Adrenal gland (tissue), 19 donors: ENCODE measurements at regions of chr9 and their contacts with region 1.

Region 1: DNA sequence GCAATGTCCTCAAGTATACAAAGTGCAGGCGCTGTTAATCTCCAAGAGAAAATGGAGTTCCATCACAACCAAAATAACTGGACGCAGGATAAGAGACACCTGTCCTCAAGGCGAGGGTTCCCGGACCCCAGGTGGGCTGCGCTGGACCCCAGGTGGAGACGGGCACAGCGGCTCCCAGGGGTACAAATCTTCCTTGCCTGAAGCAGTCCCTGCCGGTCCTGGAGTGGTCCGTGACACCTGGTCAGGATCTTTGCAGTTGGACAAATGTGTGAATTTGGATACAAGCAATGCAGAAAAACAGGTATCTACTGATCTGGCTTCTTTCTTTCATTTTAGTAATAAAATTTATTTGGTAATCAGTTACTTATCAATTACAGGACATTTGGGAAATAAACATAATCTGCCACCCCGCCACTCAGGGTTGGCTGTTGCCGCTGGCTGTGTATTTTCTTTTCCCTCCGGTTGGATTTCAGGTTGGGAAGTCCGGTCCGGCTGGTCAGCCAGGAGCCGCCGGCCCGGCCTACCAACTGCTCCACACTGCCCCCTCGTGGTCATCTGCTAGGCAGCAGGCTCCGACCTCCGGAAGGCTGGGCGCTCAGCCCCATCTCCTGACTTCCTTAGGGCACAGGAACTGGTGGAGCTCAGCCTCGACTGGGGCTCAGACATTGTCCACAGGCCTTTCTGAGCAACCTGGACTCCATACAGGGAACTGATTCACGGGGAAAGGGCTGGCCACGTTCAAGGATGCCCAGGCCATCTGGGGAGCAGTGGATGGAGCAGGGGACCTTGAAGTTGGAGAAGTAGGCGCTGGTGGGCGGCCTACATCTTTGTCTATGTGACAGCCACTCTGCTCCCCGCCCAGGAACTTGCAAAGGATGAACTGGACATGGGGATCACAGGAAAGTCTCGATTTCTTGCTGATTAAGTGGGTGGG is 43.4 kb downstream of the NXNL2 start:
- DNase-seq: peak; percentile 71 to 93 (median 84)
- H3K4me3 ChIP-seq: peak overlapping the region in 1 of 4 donors; percentile 9
- H3K27ac ChIP-seq: no peak overlapping the region
- H3K4me1 ChIP-seq: peaks cover 0 to 2% of the 10 kb centered on the region in 2 donors
- H3K27me3 ChIP-seq: no peaks in the 10 kb centered on the region
- CTCF ChIP-seq: peak; percentile 81 to 99 (median 94)
- POLR2A ChIP-seq: no peak

Region 2: GRCh38 chr9:87950765-87951488 is 627.5 kb before region 1 on chr9:
- intact Hi-C with region 1: loop called in 1 of 2 experiments (anchors 5 kb)
- DNase-seq: no peak
- H3K4me3 ChIP-seq: no peak overlapping the region
- H3K27ac ChIP-seq: no peak overlapping the region
- H3K4me1 ChIP-seq: no peaks in the 10 kb centered on the region
- H3K27me3 ChIP-seq: no peaks in the 10 kb centered on the region
- CTCF ChIP-seq: peak; percentile 36 to 77 (median 62)
- POLR2A ChIP-seq: no peak

Region 3: DNA sequence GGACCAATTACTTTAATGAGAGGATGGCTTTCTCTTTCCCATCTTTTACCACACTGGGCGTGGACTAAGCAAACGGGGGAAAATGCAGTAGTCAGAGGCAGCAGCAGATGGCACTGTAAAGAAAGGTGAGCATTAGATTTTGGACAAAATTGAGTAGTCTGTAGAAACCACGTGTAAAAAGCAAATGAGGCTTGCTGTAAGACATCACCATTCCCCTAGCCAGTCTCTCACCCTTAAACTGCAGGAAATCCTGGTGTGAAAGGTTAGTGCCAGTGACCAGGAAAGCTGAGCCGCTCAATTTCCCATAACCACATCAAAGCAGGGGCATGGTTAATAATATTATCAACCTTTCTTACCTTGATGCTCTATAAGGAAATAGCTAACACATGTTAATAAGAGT is 471.9 kb before region 1 on chr9:
- intact Hi-C with region 1: loop called in 1 of 2 experiments (anchors 5 kb)
- DNase-seq: peak in 6 of 7 donors; percentile 32 to 72 (median 36)
- H3K4me3 ChIP-seq: no peak overlapping the region
- H3K27ac ChIP-seq: no peak overlapping the region
- H3K4me1 ChIP-seq: no peaks in the 10 kb centered on the region
- H3K27me3 ChIP-seq: no peaks in the 10 kb centered on the region
- CTCF ChIP-seq: peak; percentile 26 to 65 (median 53)
- POLR2A ChIP-seq: no peak

Region 4: DNA sequence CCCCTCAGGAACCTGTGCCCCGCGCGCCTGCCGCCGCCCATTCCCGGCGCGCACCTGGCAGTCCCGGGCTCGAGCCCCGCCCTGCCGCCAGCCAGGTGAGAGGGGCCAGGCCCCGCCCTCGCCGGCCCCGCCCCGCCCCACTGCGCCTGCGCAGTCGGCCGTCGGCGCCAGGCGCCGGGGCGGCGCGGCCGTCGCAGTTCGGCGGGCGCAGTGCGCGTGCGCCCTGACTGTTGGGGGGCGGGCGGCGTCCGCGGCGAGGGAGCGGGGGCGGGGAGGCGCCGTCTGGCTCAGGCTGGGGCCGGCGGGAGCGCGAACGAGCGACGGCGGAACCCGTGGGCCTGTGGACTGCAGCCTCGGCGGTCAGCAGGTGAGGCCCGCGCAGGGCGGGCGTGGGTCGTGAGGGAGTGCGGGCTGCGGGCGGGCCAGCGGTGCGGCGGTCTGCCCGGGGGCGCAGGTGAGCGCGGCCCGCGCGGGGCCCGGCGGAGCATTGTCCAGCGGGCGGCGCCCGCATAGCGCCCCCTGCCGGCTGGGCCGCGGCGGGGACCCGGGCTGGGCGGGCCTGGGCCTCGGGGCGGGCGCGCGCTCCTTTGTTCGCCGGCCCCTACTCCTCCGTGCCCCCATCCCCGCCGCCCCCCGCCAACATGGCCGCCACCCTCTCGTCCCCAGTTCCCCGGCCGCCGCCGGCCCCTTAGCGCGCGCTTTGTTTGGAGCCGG is 190.1 kb before region 1 on chr9 and contains the start of gene SPIN1:
- intact Hi-C with region 1: loop called in 1 of 2 experiments (anchors 5 kb)
- DNase-seq: peak; percentile 78 to 89 (median 82)
- H3K4me3 ChIP-seq: peak within 1 kb of the TSS; percentile 44 to 99 (median 59)
- H3K27ac ChIP-seq: peak within 1 kb of the TSS; percentile 78 to 100 (median 96)
- H3K4me1 ChIP-seq: peaks cover 0 to 45% of the 10 kb centered on the region in 2 donors
- H3K27me3 ChIP-seq: no peaks in the 10 kb centered on the region
- CTCF ChIP-seq: peak in 3 of 6 experiments; percentile 55 to 86 (median 73)
- POLR2A ChIP-seq: peak; percentile 19 to 76
- total RNA-seq, gene SPIN1: 37.6 to 79.9 (median 61.1) TPM

Region 5: GRCh38 chr9:88645172-88645878 is 66.9 kb after region 1 on chr9:
- intact Hi-C with region 1: no loop called
- DNase-seq: no peak
- H3K4me3 ChIP-seq: no peak overlapping the region
- H3K27ac ChIP-seq: peak overlapping the region in 1 of 5 donors; percentile 42
- H3K4me1 ChIP-seq: peaks cover 0 to 3% of the 10 kb centered on the region in 2 donors
- H3K27me3 ChIP-seq: no peaks in the 10 kb centered on the region
- CTCF ChIP-seq: no peak
- POLR2A ChIP-seq: no peak

Region 6: GRCh38 chr9:88837731-88838130 is 259.3 kb after region 1 on chr9:
- intact Hi-C with region 1: no loop called
- DNase-seq: no peak
- H3K4me3 ChIP-seq: no peak overlapping the region
- H3K27ac ChIP-seq: no peak overlapping the region
- H3K4me1 ChIP-seq: peaks cover 0 to 4% of the 10 kb centered on the region in 2 donors
- H3K27me3 ChIP-seq: no peaks in the 10 kb centered on the region
- CTCF ChIP-seq: no peak
- POLR2A ChIP-seq: no peak